ENCODE measurements at regions of chr2 and their contacts with region 1.

Region 1: DNA sequence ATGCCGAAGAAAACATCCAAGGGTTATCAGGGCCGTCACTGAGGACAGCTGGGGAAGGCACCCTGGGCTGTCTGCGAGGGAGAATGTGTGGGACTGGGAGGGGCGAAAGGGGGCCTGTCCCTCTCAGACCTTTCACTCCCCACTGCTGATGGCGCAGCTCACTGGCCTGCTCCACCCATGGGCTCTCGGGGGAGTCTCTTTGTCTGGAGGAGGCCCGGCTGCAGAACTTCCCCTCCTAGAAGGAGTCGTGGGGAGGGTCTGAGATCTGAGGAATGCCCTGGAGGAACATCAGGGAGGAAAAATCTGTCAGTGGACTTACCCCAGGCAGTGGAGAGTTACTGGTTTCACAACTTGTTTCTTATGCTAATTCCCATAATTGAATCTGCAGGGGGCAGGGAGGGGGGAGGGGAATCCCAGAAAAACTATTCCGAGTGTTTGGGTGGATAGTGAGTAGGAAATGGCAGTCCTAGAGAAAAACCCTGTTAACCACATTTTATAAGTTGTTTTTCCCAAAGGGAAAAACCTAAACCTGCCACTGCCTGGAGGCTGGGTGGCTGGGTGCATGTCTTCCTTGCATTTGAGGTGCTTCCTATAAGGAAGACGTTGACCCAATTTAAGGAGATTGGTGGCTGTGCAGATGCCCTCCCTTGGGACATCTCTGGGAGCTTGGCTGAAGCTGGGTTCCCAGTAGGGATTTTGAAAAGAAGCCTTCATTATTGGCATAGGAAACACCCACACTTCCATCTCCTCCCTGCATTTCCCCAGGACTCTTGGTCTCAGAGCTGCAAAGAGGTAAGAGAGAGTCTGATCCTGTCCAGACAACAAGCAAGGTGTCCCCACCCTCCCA is 11.7 kb upstream of the SEMA4C start:
- DNase-seq: peak; percentile 65 to 70 (median 66)
- ATAC-seq: peak; percentile 69
- H3K4me3 ChIP-seq: no peak overlapping the region
- H3K27ac ChIP-seq: peak overlapping the region; percentile 42; the same call in 1 of the 3 replicates
- H3K4me1 ChIP-seq: peaks cover 19 to 96% of the 10 kb centered on the region in 2 experiments; a peak in 4 of 5 replicates
- H3K27me3 ChIP-seq: no peaks in the 10 kb centered on the region; a peak in 1 of 5 replicates
- CTCF ChIP-seq: no peak
- EP300 ChIP-seq: no peak
- POLR2A ChIP-seq: no peak
- RAD21 ChIP-seq: no peak

Region 2: GRCh38 chr2:96868555-96869280 is 12.9 kb before region 1 on chr2:
- CTCF ChIA-PET with region 1: no interaction called
- POLR2A ChIA-PET with region 1: interaction called, 73 read pairs
- in situ Hi-C with region 1: no loop called
- intact Hi-C with region 1: no loop called
- DNase-seq: peak; percentile 88 to 94 (median 90)
- ATAC-seq: peak; percentile 78
- H3K4me3 ChIP-seq: peak overlapping the region; percentile 97
- H3K27ac ChIP-seq: peak overlapping the region; percentile 95
- H3K4me1 ChIP-seq: peaks cover 27 to 89% of the 10 kb centered on the region in 2 experiments
- H3K27me3 ChIP-seq: no peaks in the 10 kb centered on the region
- CTCF ChIP-seq: peak; percentile 59 to 72 (median 62); a peak in 5 of 6 replicates
- EP300 ChIP-seq: no peak
- POLR2A ChIP-seq: peak; percentile 61; the same call in 1 of the 2 replicates
- RAD21 ChIP-seq: peak in 1 of 2 experiments; percentile 34; a peak in 2 of 4 replicates

Measured in K562 (cell line).